ENCODE measurements at regions of chr2 and their contacts with region 1.

Region 1: GRCh38 chr2:160324161-160324800 is 124.2 kb upstream of the ITGB6 start:
- DNase-seq: peak; percentile 20
- ATAC-seq: peak; percentile 47
- H3K4me3 Mint-ChIP-seq: no peak overlapping the region
- H3K27ac Mint-ChIP-seq: no peak overlapping the region
- H3K4me1 Mint-ChIP-seq: peaks cover 46% of the 10 kb centered on the region
- H3K27me3 Mint-ChIP-seq: no peaks in the 10 kb centered on the region
- CTCF ChIP-seq: no peak

Region 2: DNA sequence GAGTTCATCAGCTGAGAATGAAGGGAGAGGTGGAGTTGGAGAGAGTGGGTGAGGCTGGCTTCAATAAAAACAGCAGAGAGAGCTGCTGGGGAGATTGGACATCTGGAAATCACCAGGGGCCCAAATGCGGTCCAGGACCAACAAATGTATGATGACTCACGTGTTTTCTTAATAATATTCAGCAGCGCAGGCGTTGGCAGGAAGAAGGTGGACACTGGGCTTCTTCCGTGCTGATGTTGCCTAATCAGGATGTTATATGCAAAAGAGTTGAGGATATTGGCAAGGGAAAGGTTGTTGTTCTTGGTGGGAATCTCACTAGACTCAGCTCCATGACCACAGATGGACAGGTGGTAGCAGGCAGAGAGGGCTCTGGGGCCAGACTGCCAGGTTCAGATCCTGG is 249.1 kb before region 1 on chr2:
- CTCF ChIA-PET with region 1: no interaction called
- POLR2A ChIA-PET with region 1: no interaction called
- intact Hi-C with region 1: no loop called
- DNase-seq: no peak
- ATAC-seq: no peak
- H3K4me3 Mint-ChIP-seq: no peak overlapping the region
- H3K27ac Mint-ChIP-seq: no peak overlapping the region
- H3K4me1 Mint-ChIP-seq: no peaks in the 10 kb centered on the region
- H3K27me3 Mint-ChIP-seq: peaks cover 2% of the 10 kb centered on the region
- CTCF ChIP-seq: no peak

Region 3: GRCh38 chr2:160252278-160252887 is 71.9 kb before region 1 on chr2:
- CTCF ChIA-PET with region 1: interaction called, 10 read pairs
- POLR2A ChIA-PET with region 1: no interaction called
- intact Hi-C with region 1: loop called (anchors 2 kb)
- DNase-seq: no peak
- ATAC-seq: no peak
- H3K4me3 Mint-ChIP-seq: no peak overlapping the region
- H3K27ac Mint-ChIP-seq: no peak overlapping the region
- H3K4me1 Mint-ChIP-seq: peaks cover 6% of the 10 kb centered on the region
- H3K27me3 Mint-ChIP-seq: peaks cover 8% of the 10 kb centered on the region
- CTCF ChIP-seq: peak; percentile 71

Region 4: DNA sequence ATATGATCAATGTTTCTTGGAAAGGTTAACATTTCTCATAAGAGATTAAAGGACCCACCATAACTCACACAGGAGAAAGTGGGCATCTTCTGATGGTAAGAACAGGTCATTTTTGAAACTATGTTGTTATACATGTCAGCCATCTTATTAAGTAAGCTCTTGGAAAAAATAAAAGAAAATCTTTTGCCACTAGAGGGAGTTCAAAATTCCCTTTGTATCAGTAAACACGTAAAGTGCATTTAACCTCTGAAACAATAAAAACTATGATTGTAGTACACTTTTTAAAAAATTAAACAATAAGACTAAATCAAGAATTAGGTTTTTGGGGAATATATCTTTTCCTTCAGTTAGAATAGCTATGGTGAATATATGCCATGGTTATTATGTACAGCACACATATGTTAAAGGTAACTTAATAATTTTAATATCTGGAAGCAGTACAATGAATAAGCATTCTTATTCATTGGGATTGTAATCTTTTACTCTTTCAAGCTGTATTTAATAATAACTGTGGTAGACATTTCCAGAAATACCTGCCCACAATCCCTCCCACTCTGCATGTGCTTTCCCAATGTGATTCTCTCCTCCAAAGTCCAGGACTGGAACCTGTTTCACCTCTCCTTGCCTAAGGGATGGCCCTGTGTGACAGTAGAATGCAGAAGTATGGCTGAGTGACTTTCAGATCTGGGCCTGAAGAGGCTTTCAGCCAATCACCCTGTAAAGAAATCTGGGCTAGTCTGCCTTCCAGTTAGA is 105.1 kb after region 1 on chr2:
- CTCF ChIA-PET with region 1: interaction called, 5 read pairs
- POLR2A ChIA-PET with region 1: no interaction called
- intact Hi-C with region 1: loop called (anchors 5 kb)
- DNase-seq: no peak
- ATAC-seq: peak; percentile 46
- H3K4me3 Mint-ChIP-seq: no peak overlapping the region
- H3K27ac Mint-ChIP-seq: peak overlapping the region; percentile 54
- H3K4me1 Mint-ChIP-seq: peaks cover 34% of the 10 kb centered on the region
- H3K27me3 Mint-ChIP-seq: no peaks in the 10 kb centered on the region
- CTCF ChIP-seq: peak; percentile 65

Region 5: GRCh38 chr2:160918906-160919503 is 594.7 kb after region 1 on chr2:
- CTCF ChIA-PET with region 1: interaction called, 14 read pairs
- POLR2A ChIA-PET with region 1: no interaction called
- intact Hi-C with region 1: loop called (anchors 1 kb)
- DNase-seq: no peak
- ATAC-seq: no peak
- H3K4me3 Mint-ChIP-seq: no peak overlapping the region
- H3K27ac Mint-ChIP-seq: no peak overlapping the region
- H3K4me1 Mint-ChIP-seq: no peaks in the 10 kb centered on the region
- H3K27me3 Mint-ChIP-seq: peaks cover 8% of the 10 kb centered on the region
- CTCF ChIP-seq: no peak

Region 6: GRCh38 chr2:160970052-160970965 is 646.0 kb after region 1 on chr2:
- CTCF ChIA-PET with region 1: interaction called, 30 read pairs
- POLR2A ChIA-PET with region 1: no interaction called
- intact Hi-C with region 1: loop called (anchors 1 kb)
- DNase-seq: no peak
- ATAC-seq: no peak
- H3K4me3 Mint-ChIP-seq: no peak overlapping the region
- H3K27ac Mint-ChIP-seq: no peak overlapping the region
- H3K4me1 Mint-ChIP-seq: peaks cover 2% of the 10 kb centered on the region
- H3K27me3 Mint-ChIP-seq: no peaks in the 10 kb centered on the region
- CTCF ChIP-seq: no peak

Region 7: DNA sequence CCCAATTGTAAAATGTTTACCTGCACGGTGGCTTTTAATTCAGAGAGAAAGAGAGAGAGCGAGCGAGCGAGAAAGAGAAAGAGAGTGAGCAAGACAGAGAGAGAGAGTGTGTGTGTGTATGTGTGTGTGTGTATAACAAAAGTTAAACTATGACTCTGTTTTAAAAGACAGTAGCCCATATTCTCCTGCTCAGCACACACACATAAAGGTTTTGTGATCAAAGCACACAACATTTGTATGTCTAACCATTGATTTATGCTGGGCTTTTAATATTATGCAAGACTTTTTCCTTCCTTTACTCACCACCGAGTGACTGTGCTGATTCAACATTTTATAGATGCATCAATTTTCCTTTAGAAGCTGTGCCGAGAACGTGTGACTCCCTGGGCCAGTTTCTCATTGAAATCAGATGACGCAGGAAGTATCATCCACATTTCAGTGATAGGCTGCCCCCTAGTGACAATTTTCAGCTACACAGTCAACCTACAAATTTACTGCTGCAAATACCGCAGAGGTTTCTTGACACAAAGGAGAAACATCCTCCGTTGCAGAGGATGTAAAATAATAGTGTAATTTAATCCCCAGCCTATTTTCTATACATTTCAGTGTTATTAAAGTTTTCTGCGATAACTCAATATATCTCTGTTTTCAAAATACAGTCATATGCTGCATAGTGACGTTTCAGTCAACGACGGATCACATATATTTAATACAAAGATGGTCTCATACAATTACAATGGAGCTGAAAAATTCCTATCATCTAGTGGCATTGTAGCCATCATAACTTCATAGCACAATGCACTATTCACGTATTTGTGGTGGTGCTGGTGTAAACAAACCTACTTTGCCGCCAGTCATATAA is 670.1 kb after region 1 on chr2:
- CTCF ChIA-PET with region 1: interaction called, 105 read pairs
- POLR2A ChIA-PET with region 1: no interaction called
- intact Hi-C with region 1: loop called (anchors 1 kb)
- DNase-seq: no peak
- ATAC-seq: peak; percentile 37
- H3K4me3 Mint-ChIP-seq: no peak overlapping the region
- H3K27ac Mint-ChIP-seq: no peak overlapping the region
- H3K4me1 Mint-ChIP-seq: peaks cover 3% of the 10 kb centered on the region
- H3K27me3 Mint-ChIP-seq: no peaks in the 10 kb centered on the region
- CTCF ChIP-seq: peak; percentile 38

Region 8: DNA sequence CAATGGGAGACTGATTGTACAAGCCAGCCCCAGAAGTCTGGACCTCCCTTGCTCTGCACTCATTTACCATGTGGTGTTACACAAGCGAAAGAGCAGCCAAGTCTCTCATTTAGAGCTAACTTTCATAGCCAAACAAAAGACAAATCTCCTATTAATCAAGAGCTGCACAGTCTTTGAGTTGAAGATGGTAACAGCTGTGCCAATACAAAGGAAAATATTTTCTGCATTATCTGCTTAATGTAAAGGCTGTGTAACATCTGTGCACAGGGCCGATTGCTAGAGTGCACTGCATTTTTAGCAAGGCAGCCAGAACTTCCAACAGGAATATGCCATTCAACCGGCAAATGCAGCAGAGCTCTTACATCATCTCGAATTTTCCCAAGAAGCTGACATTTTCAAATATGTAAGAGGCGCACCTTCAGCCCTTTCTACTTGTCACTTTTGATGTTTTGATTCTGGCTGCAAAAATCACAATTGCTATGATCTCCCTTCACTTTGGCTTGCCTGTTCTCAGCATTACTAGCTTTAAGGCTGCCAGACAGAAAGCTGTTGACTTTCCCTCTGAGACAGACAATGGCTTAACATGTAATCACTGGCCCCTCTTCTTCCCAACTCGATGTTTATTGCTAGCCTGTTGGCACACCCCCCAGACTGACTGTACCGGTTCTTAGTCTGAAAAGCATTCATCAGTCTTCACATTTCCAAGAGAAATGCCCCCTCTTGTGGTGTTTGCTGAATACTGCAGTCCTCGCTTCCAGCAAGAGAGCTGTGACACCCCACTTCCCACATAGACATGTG is 739.1 kb after region 1 on chr2:
- CTCF ChIA-PET with region 1: interaction called, 11 read pairs
- POLR2A ChIA-PET with region 1: no interaction called
- intact Hi-C with region 1: loop called (anchors 2 kb)
- DNase-seq: peak; percentile 18
- ATAC-seq: peak; percentile 93
- H3K4me3 Mint-ChIP-seq: no peak overlapping the region
- H3K27ac Mint-ChIP-seq: no peak overlapping the region
- H3K4me1 Mint-ChIP-seq: peaks cover 4% of the 10 kb centered on the region
- H3K27me3 Mint-ChIP-seq: no peaks in the 10 kb centered on the region
- CTCF ChIP-seq: peak; percentile 94

Measured in activated B cell treated with CpG ODN at 0.5 μM for 24 hours (primary cell).